Heart left ventricle (tissue), 16 donors: ENCODE measurements at regions of chr2 and their contacts with region 1.

Region 1: DNA sequence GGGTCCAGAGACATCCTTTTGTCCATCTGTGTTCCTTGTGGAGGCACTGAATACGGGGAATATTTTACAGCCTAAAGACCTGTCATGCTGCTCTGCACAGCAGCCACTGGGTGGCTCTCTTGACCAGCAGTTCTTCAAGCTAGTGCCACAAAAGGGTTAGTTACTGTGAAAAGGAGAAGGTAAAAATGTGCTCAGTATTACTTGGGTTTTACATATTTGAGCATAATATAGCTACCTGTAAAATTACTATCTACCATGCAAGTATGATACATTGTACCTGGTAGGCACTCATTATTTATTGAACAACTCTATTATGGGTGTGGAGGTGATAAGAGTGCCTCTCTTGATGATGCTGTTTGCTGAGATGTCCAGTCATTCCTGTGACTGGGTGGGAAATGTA is 23.6 kb downstream of the FZD5 start:
- DNase-seq: peak in 4 of 5 donors; percentile 22 to 51 (median 40)
- ATAC-seq: peak; percentile 82 to 89 (median 85)
- H3K4me3 ChIP-seq: no peak overlapping the region
- H3K27ac ChIP-seq: no peak overlapping the region
- H3K4me1 ChIP-seq: no peaks in the 10 kb centered on the region
- H3K27me3 ChIP-seq: no peaks in the 10 kb centered on the region
- CTCF ChIP-seq: peak; percentile 77 to 95 (median 86)
- POLR2A ChIP-seq: no peak

Region 2: DNA sequence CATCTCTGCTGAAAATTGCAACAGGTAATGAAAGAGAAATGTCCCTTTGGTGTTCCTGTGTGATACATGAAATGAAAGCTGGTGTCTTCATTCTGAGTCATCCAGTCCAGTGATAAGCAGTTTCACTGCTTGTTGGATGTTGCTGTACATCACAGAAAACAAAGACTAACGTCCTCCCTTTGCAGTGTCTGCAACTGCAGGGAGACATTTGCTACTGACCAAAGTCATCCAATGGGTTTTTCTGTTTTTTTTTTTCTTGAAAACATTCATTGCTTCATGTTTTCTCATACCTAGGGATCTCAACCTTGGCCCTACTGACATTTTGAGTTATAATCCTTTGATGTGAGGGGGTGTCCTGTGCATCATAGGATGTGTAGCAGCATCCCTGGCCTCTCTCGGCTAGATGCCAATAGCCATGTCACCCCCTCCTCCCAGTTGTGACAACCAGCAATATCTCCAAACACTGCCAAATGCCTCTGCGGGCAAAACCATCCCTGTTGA is 87.2 kb after region 1 on chr2:
- intact Hi-C with region 1: no loop called
- DNase-seq: no peak
- ATAC-seq: no peak
- H3K4me3 ChIP-seq: no peak overlapping the region
- H3K27ac ChIP-seq: no peak overlapping the region
- H3K4me1 ChIP-seq: peaks cover 0 to 42% (median 18%) of the 10 kb centered on the region in 12 donors
- H3K27me3 ChIP-seq: no peaks in the 10 kb centered on the region
- CTCF ChIP-seq: no peak
- POLR2A ChIP-seq: no peak

Region 3: GRCh38 chr2:207974216-207974605 is 228.1 kb after region 1 on chr2:
- intact Hi-C with region 1: loop called in 9 of 10 experiments (anchors 2 to 5 kb)
- DNase-seq: no peak
- ATAC-seq: peak in 2 of 4 donors; percentile 28 to 53
- H3K4me3 ChIP-seq: no peak overlapping the region
- H3K27ac ChIP-seq: no peak overlapping the region
- H3K4me1 ChIP-seq: peaks cover 0 to 19% (median 7%) of the 10 kb centered on the region in 12 donors
- H3K27me3 ChIP-seq: no peaks in the 10 kb centered on the region
- CTCF ChIP-seq: no peak
- POLR2A ChIP-seq: no peak

Region 4: DNA sequence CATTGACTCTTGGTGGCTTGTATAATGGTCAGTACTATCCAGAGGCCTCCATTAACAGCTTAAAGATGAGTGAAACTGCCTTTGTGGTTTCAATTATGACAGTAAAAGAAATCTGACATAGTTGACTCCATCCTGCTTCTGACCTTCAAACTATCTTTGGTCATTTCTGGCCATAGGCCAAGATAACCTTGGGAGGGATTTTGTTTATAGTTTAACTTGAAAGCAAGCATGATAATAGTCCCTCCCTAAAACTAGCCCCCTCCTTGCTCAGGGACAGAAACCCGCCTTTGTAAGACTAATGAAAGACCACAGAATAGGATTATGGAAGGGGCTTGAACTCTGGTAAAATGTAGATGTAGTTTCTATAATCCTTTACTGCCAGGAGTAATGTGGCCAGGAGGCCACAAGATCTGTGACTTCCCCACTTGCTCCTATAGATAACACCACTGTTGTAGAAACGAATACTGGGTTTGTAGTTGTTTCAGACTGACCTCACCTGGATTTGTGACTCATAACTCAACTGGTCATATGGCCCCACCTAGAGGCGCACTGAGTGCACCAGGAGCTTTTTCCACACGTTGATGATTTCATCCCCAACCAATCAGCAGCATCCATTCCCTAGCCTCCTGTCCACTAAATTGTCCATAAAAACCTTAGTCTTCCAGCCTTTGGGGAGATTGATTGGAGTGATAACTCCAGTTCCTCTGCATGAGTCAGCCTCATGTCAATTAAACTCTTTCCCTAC is 287.8 kb after region 1 on chr2:
- intact Hi-C with region 1: loop called in 4 of 10 experiments (anchors 2 to 10 kb)
- DNase-seq: no peak
- ATAC-seq: peak; percentile 32 to 75 (median 68)
- H3K4me3 ChIP-seq: no peak overlapping the region
- H3K27ac ChIP-seq: no peak overlapping the region
- H3K4me1 ChIP-seq: peaks cover 0 to 13% (median 0%) of the 10 kb centered on the region in 12 donors
- H3K27me3 ChIP-seq: no peaks in the 10 kb centered on the region
- CTCF ChIP-seq: peak; percentile 13 to 57 (median 40)
- POLR2A ChIP-seq: no peak

Region 5: DNA sequence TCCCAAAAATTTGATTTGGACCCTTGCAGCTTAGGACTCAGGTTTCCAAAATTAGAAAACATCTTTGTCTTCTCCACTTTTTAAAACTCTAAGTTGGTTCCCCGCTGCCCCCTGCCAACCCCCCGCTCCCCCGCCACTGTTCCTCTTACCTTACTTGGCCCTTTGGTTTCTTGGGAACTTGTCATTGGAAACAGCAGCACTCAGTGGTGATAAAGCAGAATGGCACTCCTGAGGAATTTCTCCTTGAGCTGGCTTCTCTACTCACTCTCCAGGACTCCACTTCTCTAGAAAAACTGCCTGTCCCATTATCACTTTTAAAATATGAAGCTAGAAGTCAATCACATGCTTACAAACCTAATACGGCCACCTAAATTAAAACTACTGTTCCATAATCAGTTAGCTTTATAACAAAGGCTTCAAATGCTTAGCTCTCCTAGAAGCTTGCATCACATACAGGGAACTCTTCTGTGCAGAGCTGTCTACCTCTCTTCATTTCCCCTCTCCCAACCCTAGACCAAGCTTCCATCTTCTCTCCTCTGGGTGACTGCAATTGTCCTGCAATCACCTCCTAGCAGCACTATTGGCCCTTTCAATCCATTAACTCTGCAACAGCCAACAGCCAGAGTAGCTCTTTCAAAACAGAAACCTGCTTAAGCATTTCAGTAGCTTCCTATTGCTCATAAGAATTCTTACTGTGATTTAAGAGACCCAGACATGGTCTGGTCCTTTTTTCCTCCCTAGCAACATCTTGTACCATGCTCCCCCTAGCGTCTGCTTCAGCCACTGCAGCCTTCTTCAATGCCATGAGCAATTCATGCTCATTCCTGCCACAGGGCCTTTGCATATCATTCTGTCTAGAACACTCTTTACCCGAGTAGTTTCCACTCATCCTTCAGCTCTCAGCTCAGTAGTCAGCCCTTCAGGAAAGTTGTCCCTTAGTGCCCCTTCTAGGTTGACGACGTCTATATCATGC is 294.4 kb after region 1 on chr2:
- intact Hi-C with region 1: loop called in 9 of 10 experiments (anchors 1 to 10 kb)
- DNase-seq: peak; percentile 46 to 74 (median 61)
- ATAC-seq: peak; percentile 59 to 71 (median 70)
- H3K4me3 ChIP-seq: no peak overlapping the region
- H3K27ac ChIP-seq: peak overlapping the region in 1 of 12 donors; percentile 24
- H3K4me1 ChIP-seq: no peaks in the 10 kb centered on the region
- H3K27me3 ChIP-seq: no peaks in the 10 kb centered on the region
- CTCF ChIP-seq: peak; percentile 52 to 75 (median 62)
- POLR2A ChIP-seq: no peak

Region 6: DNA sequence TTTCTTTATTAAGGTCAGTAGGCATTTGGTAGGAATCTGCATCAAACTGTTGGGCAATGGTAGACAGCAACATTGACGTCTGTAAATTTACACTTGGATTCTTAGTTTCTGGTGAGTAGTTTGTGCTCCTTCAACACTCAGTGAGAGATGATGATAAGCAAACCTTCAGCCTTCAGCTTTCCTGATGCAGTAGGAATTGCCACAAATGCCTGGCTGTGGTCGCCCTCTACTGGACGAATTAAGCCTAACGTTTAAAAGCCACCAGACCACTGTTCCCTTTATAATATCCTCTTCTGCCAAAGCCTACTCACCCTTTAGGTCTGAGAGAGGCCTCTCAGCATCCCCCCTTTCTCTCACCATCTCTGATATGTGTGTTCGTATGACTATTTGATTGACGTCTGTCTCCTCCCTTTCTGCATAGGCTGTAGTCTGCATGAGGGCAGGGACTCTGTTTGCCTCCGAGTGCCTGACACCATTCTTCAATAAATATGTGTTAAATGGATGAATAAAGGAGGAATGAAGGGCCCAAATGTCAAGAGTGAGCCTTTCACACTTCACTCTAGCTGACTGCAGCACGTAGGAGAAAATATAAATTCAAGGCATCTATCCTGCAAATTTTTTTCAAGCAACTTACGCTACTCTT is 326.2 kb after region 1 on chr2:
- intact Hi-C with region 1: loop called (anchors 1 to 10 kb)
- DNase-seq: peak in 4 of 5 donors; percentile 42 to 52 (median 49)
- ATAC-seq: peak in 3 of 4 donors; percentile 65 to 80 (median 77)
- H3K4me3 ChIP-seq: no peak overlapping the region
- H3K27ac ChIP-seq: no peak overlapping the region
- H3K4me1 ChIP-seq: peaks cover 0 to 6% (median 0%) of the 10 kb centered on the region in 12 donors
- H3K27me3 ChIP-seq: peaks cover 0 to 23% (median 0%) of the 10 kb centered on the region in 9 donors
- CTCF ChIP-seq: peak; percentile 64 to 89 (median 75)
- POLR2A ChIP-seq: no peak